Activated naive CD4-positive, alpha-beta T cell treated with anti-CD3 and anti-CD28 coated beads, Interleukin-2, amount 10 ng/mL, durations not matched to agents 7 days and 5 days (primary cell): ENCODE measurements at regions of chr1 and their contacts with region 1.

Region 1: GRCh38 chr1:51296383-51297357 is 33.7 kb downstream of the TTC39A start:
- DNase-seq: peak; percentile 83
- H3K4me3 Mint-ChIP-seq: peak overlapping the region; percentile 56
- H3K27ac Mint-ChIP-seq: no peak overlapping the region
- H3K4me1 Mint-ChIP-seq: peaks cover 26% of the 10 kb centered on the region
- H3K27me3 Mint-ChIP-seq: peaks cover 33% of the 10 kb centered on the region

Region 2: DNA sequence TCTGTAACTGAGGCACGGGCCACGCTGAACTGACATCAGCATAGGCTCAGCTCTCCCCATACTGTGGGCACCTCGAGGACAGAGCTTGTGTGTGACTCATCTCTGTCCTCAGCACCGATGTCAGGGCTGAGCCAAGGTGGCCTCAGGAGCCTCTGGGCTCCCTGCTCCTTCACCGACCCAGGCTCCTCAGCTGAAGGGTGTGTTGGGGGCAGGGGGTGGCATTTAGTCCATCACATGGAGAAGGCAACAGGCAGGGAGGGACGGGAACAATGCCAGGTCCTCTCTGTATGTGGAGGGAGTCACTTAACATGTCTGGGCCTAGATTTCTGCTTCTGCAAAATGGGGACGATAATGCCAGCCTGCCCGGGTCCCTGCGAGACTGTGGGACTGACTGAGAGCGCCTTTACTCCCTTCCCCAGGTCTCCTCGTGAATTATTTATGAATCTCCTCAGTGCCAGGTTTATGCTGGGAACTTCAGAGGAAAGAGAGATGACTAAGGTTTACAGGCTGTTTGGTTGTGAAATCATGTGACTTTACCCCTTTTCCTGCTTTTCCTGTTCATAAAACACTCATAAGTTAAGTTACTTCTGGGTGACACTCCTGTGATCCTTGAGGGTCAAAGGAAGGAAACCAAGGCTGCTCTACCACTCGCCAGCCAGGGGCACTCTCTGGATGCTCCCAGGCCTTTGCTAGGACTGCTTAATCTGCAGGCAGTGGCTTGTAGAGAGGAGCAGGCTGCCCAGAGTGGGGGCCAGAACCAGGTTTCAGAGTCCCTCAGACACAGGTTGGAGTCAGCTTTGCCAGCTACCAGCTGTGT is 17.5 kb after region 1 on chr1:
- CTCF ChIA-PET with region 1: interaction called, 17 read pairs
- DNase-seq: no peak
- H3K4me3 Mint-ChIP-seq: no peak overlapping the region
- H3K27ac Mint-ChIP-seq: no peak overlapping the region
- H3K4me1 Mint-ChIP-seq: peaks cover 8% of the 10 kb centered on the region
- H3K27me3 Mint-ChIP-seq: peaks cover 8% of the 10 kb centered on the region